WTC11 (cell line): ENCODE measurements at regions of chr18 and their contacts with region 1.

Region 1: DNA sequence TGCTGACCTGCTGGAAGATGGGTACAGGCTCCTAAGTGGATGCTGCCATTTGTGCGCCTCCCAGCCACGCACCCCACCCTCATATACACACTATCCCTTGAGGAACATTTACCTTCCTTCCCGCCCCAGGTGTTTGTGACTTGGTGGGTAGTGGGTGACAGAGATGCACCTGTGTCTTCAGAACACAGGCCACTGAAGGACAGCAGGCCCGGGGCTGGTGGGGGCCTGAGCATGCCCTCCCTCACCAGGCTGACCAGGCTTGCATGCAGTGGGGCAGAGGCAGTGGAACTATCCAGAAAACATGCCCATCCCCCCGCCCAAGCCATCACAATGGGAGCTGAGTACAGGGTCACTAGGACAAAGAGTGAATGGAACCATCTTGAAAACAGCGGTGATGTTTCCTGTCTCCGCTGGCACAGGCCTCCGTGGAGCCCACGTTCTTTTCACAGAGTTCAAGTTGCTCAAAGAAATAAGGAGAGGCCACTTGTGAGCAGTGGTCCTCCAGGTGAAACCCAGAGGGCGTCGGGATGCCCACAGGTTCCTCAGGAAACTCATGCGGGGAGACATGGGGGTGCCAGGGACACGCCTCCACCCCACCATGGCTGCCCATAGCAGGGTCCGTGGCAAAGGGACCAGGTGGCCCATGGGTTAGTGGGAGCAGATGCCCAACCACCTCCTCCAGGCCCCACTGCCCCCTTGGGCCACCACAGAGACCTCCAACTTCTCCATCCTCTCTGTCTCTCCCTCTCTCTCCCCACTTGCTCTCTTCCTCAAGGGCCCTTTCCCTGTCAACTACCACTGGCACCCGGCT is 90.9 kb downstream of the MALT1 start:
- DNase-seq: no peak
- ATAC-seq: no peak
- H3K4me3 Mint-ChIP-seq: no peak overlapping the region
- H3K27ac Mint-ChIP-seq: no peak overlapping the region
- H3K4me1 Mint-ChIP-seq: peaks cover 11% of the 10 kb centered on the region
- H3K27me3 Mint-ChIP-seq: no peaks in the 10 kb centered on the region; the same call in 1 of the 2 replicates
- CTCF ChIP-seq: no peak

Region 2: DNA sequence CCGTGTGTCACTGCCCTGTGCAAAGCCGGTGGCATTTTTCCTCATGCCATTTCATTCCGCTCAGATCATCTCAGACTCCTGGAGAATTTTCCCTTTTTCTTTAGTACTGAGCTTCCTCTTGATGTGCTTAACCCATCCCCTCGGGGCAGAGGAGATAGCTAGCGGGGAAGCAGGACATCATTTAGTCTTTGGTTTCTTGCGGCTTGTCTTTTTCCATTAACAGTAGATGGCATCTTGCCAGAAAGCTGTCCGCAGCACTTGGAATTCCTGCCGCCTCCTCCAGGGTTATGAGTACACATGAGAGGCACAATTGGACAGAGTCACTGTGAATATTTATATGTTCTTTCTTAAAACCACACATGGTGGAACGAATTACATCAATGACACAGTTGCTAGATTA is 359.9 kb before region 1 on chr18:
- CTCF ChIA-PET with region 1: interaction called, 10 read pairs
- POLR2A ChIA-PET with region 1: no interaction called
- DNase-seq: no peak
- ATAC-seq: no peak
- H3K4me3 Mint-ChIP-seq: no peak overlapping the region
- H3K27ac Mint-ChIP-seq: peak overlapping the region; percentile 21; the same call in 1 of the 2 replicates
- H3K4me1 Mint-ChIP-seq: peaks cover 5% of the 10 kb centered on the region
- H3K27me3 Mint-ChIP-seq: no peaks in the 10 kb centered on the region; the same call in 1 of the 2 replicates
- CTCF ChIP-seq: no peak

Region 3: GRCh38 chr18:58529714-58530354 is 232.3 kb before region 1 on chr18:
- CTCF ChIA-PET with region 1: interaction called, 144 read pairs
- POLR2A ChIA-PET with region 1: interaction called, 4 read pairs
- DNase-seq: peak; percentile 82
- ATAC-seq: peak; percentile 92
- H3K4me3 Mint-ChIP-seq: no peak overlapping the region
- H3K27ac Mint-ChIP-seq: no peak overlapping the region
- H3K4me1 Mint-ChIP-seq: peaks cover 10% of the 10 kb centered on the region
- H3K27me3 Mint-ChIP-seq: no peaks in the 10 kb centered on the region
- CTCF ChIP-seq: peak; percentile 77

Region 4: GRCh38 chr18:58541789-58542425 is 220.3 kb before region 1 on chr18:
- CTCF ChIA-PET with region 1: interaction called, 61 read pairs
- POLR2A ChIA-PET with region 1: no interaction called
- DNase-seq: no peak
- ATAC-seq: no peak
- H3K4me3 Mint-ChIP-seq: no peak overlapping the region
- H3K27ac Mint-ChIP-seq: no peak overlapping the region
- H3K4me1 Mint-ChIP-seq: peaks cover 35% of the 10 kb centered on the region
- H3K27me3 Mint-ChIP-seq: 0 out of 2 replicates have a peak, but pooled peaks cover 1% of the 10 kb centered on the region
- CTCF ChIP-seq: no peak

Region 5: DNA sequence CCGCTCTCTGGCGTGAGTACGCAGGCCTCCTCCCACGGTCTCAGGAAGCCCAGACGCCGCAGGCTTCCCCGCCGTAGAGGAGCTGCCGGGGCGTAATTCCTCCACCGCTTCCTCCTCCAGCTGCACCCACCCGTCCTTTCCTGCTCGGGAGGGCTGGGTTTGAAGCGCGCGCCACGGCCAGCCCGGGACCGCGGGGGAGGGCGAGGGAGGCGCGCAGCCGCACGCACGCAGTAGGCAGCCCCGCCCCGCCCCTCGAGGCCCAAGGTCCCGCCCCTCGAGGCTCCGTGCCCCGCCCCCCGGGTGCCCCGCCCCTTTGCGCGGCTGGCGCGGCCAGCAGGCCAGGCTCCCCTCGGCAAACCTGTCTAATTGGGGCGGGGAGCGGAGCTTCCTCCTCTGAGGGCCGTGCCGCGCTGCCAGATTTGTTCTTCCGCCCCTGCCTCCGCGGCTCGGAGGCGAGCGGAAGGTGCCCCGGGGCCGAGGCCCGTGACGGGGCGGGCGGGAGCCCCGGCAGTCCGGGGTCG is 91.0 kb before region 1 on chr18 and contains the start of gene MALT1:
- CTCF ChIA-PET with region 1: interaction called, 45 read pairs
- POLR2A ChIA-PET with region 1: interaction called, 3 read pairs
- DNase-seq: peak; percentile 94
- ATAC-seq: peak; percentile 86
- H3K4me3 Mint-ChIP-seq: peak within 1 kb of the TSS; percentile 87
- H3K27ac Mint-ChIP-seq: peak within 1 kb of the TSS; percentile 85
- H3K4me1 Mint-ChIP-seq: peaks cover 18% of the 10 kb centered on the region
- H3K27me3 Mint-ChIP-seq: no peaks in the 10 kb centered on the region
- CTCF ChIP-seq: no peak
- total RNA-seq, gene MALT1: 11.2 to 13.6 TPM (median 13.2 TPM) in 3 replicates